ENCODE measurements at regions of chr13 and their contacts with region 1.

Region 1: GRCh38 chr13:30114571-30115256 is 192.6 kb downstream of the KATNAL1 start:
- DNase-seq: peak; percentile 85 to 88
- H3K4me3 ChIP-seq: peak overlapping the region; percentile 48 to 88 (median 69)
- H3K27ac ChIP-seq: peak overlapping the region; percentile 88 to 89
- H3K4me1 ChIP-seq: peaks cover 6 to 22% of the 10 kb centered on the region in 2 donors
- H3K27me3 ChIP-seq: no peaks in the 10 kb centered on the region
- CTCF ChIP-seq: peak; percentile 84 to 94 (median 92)
- POLR2A ChIP-seq: no peak

Region 2: DNA sequence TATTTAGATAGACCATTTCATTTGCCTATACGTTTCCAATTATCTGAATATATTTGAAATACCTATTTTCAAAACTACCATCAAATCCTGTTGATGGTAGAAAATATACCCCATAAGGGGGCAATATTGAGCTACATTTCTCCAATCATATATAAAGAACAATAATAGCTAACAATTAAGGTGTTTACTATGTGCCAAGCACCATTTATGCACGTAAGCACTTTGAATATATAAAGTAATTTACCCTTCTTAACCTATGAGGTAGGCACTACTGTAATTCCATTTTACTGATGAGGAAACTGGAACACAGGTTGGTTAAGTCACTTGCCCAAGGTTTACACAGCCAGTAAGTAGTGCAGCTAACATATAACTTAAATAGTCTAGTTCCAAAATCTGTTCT is 343.5 kb before region 1 on chr13:
- intact Hi-C with region 1: loop called (anchors 5 kb)
- DNase-seq: no peak
- H3K4me3 ChIP-seq: no peak overlapping the region
- H3K27ac ChIP-seq: no peak overlapping the region
- H3K4me1 ChIP-seq: no peaks in the 10 kb centered on the region
- H3K27me3 ChIP-seq: no peaks in the 10 kb centered on the region
- CTCF ChIP-seq: peak in 2 of 3 donors; percentile 31 to 32
- POLR2A ChIP-seq: no peak

Region 3: DNA sequence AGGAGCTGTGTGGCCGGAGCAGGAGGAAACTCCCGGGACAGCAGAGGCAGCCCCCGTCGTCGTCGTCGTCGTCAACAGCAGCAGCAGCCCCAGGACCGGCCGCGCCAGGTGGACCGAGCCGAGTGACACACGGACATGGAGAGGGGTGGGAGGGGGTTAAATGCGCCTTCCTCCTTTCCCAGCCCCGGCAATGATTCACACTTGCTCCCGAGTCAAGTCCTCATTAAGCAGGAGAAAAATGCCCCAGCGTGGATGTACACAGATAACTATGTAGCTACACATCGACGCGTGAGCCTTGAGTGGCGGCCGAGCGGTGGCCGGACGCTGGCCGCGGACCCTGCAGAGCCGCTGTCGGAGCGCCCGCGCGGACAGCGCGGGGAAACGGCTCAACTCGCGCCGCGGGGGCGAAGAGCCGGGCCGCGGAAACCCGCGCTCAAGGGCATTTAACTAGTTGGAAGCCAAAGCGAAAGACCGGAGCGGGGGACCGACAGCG is 264.9 kb before region 1 on chr13:
- intact Hi-C with region 1: loop called (anchors 10 kb)
- DNase-seq: peak; percentile 65 to 66
- H3K4me3 ChIP-seq: peak overlapping the region; percentile 86 to 95 (median 94)
- H3K27ac ChIP-seq: peak overlapping the region; percentile 99 to 100
- H3K4me1 ChIP-seq: peaks cover 0 to 4% of the 10 kb centered on the region in 2 donors
- H3K27me3 ChIP-seq: no peaks in the 10 kb centered on the region
- CTCF ChIP-seq: no peak
- POLR2A ChIP-seq: no peak

Region 4: GRCh38 chr13:29948244-29948643 is 166.5 kb before region 1 on chr13:
- intact Hi-C with region 1: loop called (anchors 10 kb)
- DNase-seq: no peak
- H3K4me3 ChIP-seq: no peak overlapping the region
- H3K27ac ChIP-seq: no peak overlapping the region
- H3K4me1 ChIP-seq: no peaks in the 10 kb centered on the region
- H3K27me3 ChIP-seq: no peaks in the 10 kb centered on the region
- CTCF ChIP-seq: no peak
- POLR2A ChIP-seq: no peak

Measured in breast epithelium (tissue), 4 donors.